CD4-positive, alpha-beta T cell (primary cell): ENCODE measurements at regions of chr7 and their contacts with region 1.

Region 1: GRCh38 chr7:150716368-150716767 is at the start of gene GIMAP1:
- DNase-seq: peak; percentile 35 to 85 (median 72)
- ATAC-seq: peak; percentile 88
- H3K4me3 ChIP-seq: peak within 1 kb of the TSS; percentile 79
- H3K4me3 Mint-ChIP-seq: peak within 1 kb of the TSS; percentile 100
- H3K27ac ChIP-seq: peak within 1 kb of the TSS; percentile 81 to 83
- H3K27ac Mint-ChIP-seq: peak within 1 kb of the TSS; percentile 87
- H3K4me1 ChIP-seq: peaks cover 51% of the 10 kb centered on the region
- H3K4me1 Mint-ChIP-seq: peaks cover 78% of the 10 kb centered on the region
- H3K27me3 ChIP-seq: no peaks in the 10 kb centered on the region
- H3K27me3 Mint-ChIP-seq: no peaks in the 10 kb centered on the region
- CTCF ChIP-seq: no peak
- total RNA-seq, gene GIMAP1: 8.0 to 8.1 TPM

Region 2: DNA sequence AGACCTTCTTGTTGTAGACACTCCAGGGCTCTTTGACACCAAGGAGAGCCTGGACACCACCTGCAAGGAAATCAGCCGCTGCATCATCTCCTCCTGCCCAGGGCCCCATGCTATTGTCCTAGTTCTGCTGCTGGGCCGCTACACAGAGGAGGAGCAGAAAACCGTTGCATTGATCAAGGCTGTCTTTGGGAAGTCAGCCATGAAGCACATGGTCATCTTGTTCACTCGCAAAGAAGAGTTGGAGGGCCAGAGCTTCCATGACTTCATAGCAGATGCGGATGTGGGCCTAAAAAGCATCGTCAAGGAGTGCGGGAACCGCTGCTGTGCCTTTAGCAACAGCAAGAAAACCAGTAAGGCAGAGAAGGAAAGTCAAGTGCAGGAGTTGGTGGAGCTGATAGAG is 196.2 kb before region 1 on chr7:
- CTCF ChIA-PET with region 1: no interaction called
- POLR2A ChIA-PET with region 1: interaction called, 33 read pairs
- intact Hi-C with region 1: no loop called
- DNase-seq: peak in 9 of 14 experiments; percentile 23 to 59 (median 47)
- ATAC-seq: peak; percentile 33
- H3K4me3 ChIP-seq: peak overlapping the region; percentile 79
- H3K4me3 Mint-ChIP-seq: peak overlapping the region; percentile 100
- H3K27ac ChIP-seq: peak overlapping the region; percentile 59 to 60
- H3K27ac Mint-ChIP-seq: peak overlapping the region; percentile 93
- H3K4me1 ChIP-seq: peaks cover 12% of the 10 kb centered on the region
- H3K4me1 Mint-ChIP-seq: peaks cover 36% of the 10 kb centered on the region
- H3K27me3 ChIP-seq: no peaks in the 10 kb centered on the region
- H3K27me3 Mint-ChIP-seq: no peaks in the 10 kb centered on the region
- CTCF ChIP-seq: no peak

Region 3: DNA sequence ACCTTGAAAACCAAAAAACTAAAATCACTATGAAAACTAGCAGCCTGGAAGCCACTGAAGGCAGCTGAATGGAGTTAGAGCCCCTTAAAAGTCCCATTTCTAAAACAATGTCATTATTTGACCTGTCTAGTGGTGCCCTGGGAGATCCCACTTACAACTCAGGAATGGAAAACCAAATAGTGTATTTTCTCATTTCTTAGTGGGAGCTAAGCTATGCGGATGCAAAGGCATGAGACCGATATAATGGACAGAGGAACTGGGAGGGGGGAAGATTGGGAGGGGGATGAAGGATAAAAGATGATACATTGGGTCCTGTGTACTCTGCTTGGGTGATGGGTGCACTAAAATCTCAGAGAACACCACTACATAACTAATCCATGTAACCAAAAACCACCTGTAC is 40.7 kb before region 1 on chr7:
- CTCF ChIA-PET with region 1: no interaction called
- POLR2A ChIA-PET with region 1: interaction called, 15 read pairs
- intact Hi-C with region 1: loop called in 1 of 2 experiments (anchors 5 kb)
- DNase-seq: no peak
- ATAC-seq: no peak
- H3K4me3 ChIP-seq: peak overlapping the region; percentile 8
- H3K4me3 Mint-ChIP-seq: peak overlapping the region; percentile 78
- H3K27ac ChIP-seq: peak overlapping the region; percentile 58 to 78
- H3K27ac Mint-ChIP-seq: peak overlapping the region; percentile 79
- H3K4me1 ChIP-seq: peaks cover 40% of the 10 kb centered on the region
- H3K4me1 Mint-ChIP-seq: peaks cover 87% of the 10 kb centered on the region
- H3K27me3 ChIP-seq: no peaks in the 10 kb centered on the region
- H3K27me3 Mint-ChIP-seq: no peaks in the 10 kb centered on the region
- CTCF ChIP-seq: no peak

Region 4: DNA sequence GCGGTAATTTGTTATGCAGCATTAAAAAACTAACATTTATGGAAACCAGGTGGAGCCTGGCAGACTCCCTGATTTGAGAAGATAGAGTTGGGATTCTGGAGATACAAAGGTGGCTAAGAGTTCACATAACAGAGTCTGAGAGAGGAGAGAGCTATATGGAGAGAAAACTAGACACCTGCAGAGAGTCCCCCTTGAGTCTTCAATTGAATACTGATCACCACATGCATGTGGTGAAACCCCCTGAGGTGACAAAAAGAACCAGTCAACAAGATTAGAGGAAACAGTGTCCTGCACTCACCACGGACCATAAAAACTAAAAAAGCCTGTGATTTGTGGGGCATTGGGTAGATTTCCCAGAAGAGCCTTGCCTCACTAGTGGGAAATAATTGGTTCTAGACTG is 20.7 kb before region 1 on chr7:
- CTCF ChIA-PET with region 1: interaction called, 3 read pairs
- POLR2A ChIA-PET with region 1: interaction called, 48 read pairs
- intact Hi-C with region 1: no loop called
- DNase-seq: no peak
- ATAC-seq: no peak
- H3K4me3 ChIP-seq: no peak overlapping the region
- H3K4me3 Mint-ChIP-seq: no peak overlapping the region
- H3K27ac ChIP-seq: no peak overlapping the region
- H3K27ac Mint-ChIP-seq: no peak overlapping the region
- H3K4me1 ChIP-seq: peaks cover 16% of the 10 kb centered on the region
- H3K4me1 Mint-ChIP-seq: peaks cover 16% of the 10 kb centered on the region
- H3K27me3 ChIP-seq: no peaks in the 10 kb centered on the region
- H3K27me3 Mint-ChIP-seq: no peaks in the 10 kb centered on the region
- CTCF ChIP-seq: no peak

Region 5: GRCh38 chr7:151558575-151558974 is 842.2 kb after region 1 on chr7:
- CTCF ChIA-PET with region 1: no interaction called
- POLR2A ChIA-PET with region 1: no interaction called
- intact Hi-C with region 1: no loop called
- DNase-seq: no peak
- ATAC-seq: no peak
- H3K4me3 ChIP-seq: no peak overlapping the region
- H3K4me3 Mint-ChIP-seq: no peak overlapping the region
- H3K27ac ChIP-seq: no peak overlapping the region
- H3K27ac Mint-ChIP-seq: no peak overlapping the region
- H3K4me1 ChIP-seq: peaks cover 8% of the 10 kb centered on the region
- H3K4me1 Mint-ChIP-seq: peaks cover 7% of the 10 kb centered on the region
- H3K27me3 ChIP-seq: no peaks in the 10 kb centered on the region
- H3K27me3 Mint-ChIP-seq: no peaks in the 10 kb centered on the region
- CTCF ChIP-seq: no peak